Activated CD8-positive, alpha-beta T cell treated with anti-CD3 and anti-CD28 coated beads for 36 hours (primary cell): ENCODE measurements at regions of chr1 and their contacts with region 1.

Region 1: DNA sequence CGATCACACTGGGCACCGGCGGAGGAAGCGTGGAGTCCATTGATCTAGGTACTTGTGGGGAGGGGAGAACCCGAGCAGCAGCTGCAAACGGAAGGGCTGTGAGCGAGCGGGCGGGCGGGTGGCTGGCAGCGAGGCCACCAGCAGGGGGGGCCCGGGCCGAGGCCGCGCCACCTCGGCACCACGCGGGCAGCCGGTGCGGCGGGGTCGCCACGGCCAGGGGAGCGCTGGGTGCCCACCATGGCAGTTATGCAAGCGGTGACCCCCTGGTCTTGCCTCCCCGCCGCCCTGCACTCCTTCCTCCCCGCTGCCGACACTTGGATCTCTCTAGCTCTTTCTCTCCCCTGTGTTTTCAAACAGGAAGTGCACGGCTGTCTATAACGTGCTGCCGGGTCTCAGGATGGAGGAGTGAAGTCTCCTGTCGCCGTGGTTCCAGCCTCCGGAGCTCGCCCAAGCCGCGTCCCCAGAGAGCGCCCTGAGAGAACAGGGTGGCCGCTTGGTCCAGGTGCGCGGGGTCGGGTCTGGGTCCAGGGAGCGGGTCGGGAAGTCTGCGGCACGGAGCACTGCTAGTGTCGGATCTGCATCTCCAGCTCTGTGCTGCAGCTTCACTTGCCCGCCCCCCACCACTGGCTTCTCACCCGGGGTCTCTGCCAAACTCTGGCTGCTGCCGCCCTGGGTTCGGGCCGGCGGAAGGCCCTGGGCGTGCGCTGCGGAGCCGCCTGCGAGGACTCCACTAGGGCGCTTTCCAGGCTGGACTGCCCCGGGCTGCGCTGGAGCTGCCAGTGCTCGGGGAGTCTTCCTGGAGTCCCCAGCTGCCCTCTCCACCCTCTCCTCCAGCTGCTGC is 22.7 kb downstream of the LRRC8D start:
- DNase-seq: peak; percentile 87
- ATAC-seq: peak; percentile 84
- H3K4me3 Mint-ChIP-seq: peak overlapping the region; percentile 88
- H3K27ac Mint-ChIP-seq: peak overlapping the region; percentile 96
- H3K4me1 Mint-ChIP-seq: peaks cover 54% of the 10 kb centered on the region
- H3K27me3 Mint-ChIP-seq: no peaks in the 10 kb centered on the region
- CTCF ChIP-seq: peak; percentile 88

Region 2: GRCh38 chr1:89739013-89739843 is 104.3 kb before region 1 on chr1:
- CTCF ChIA-PET with region 1: no interaction called
- POLR2A ChIA-PET with region 1: no interaction called
- intact Hi-C with region 1: no loop called
- DNase-seq: peak; percentile 83
- ATAC-seq: peak; percentile 91
- H3K4me3 Mint-ChIP-seq: peak overlapping the region; percentile 70
- H3K27ac Mint-ChIP-seq: peak overlapping the region; percentile 93
- H3K4me1 Mint-ChIP-seq: peaks cover 50% of the 10 kb centered on the region
- H3K27me3 Mint-ChIP-seq: no peaks in the 10 kb centered on the region
- CTCF ChIP-seq: no peak

Region 3: DNA sequence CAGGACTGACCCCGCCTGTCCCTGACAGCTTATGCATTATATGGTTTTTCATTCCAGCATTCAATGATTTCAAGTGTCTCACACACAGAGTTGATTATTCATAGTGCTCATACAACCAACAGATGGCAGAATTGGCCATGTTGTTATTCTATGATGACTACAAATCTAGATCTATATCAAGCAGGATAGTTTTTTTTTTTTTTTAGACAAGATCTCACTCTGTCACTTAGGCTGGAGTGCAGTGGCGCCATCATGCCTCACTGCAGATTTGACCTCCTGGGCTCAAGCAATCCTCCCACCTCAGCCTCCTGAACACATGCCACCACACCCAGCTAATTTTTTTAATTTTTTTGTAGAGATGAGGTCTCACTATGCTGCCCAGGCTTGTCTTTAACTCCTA is 62.8 kb before region 1 on chr1:
- CTCF ChIA-PET with region 1: interaction called, 8 read pairs
- POLR2A ChIA-PET with region 1: interaction called, 11 read pairs
- intact Hi-C with region 1: loop called (anchors 10 kb)
- DNase-seq: peak; percentile 62
- ATAC-seq: peak; percentile 68
- H3K4me3 Mint-ChIP-seq: peak overlapping the region; percentile 36
- H3K27ac Mint-ChIP-seq: peak overlapping the region; percentile 93
- H3K4me1 Mint-ChIP-seq: peaks cover 48% of the 10 kb centered on the region
- H3K27me3 Mint-ChIP-seq: no peaks in the 10 kb centered on the region
- CTCF ChIP-seq: peak; percentile 56

Region 4: GRCh38 chr1:89820422-89821321 is 22.8 kb before region 1 on chr1 and contains the start of gene LRRC8D:
- CTCF ChIA-PET with region 1: interaction called, 31 read pairs
- POLR2A ChIA-PET with region 1: interaction called, 21 read pairs
- intact Hi-C with region 1: no loop called
- DNase-seq: peak; percentile 80
- ATAC-seq: peak; percentile 78
- H3K4me3 Mint-ChIP-seq: peak within 1 kb of the TSS; percentile 87
- H3K27ac Mint-ChIP-seq: peak within 1 kb of the TSS; percentile 88
- H3K4me1 Mint-ChIP-seq: peaks cover 43% of the 10 kb centered on the region
- H3K27me3 Mint-ChIP-seq: no peaks in the 10 kb centered on the region
- CTCF ChIP-seq: no peak
- total RNA-seq, gene LRRC8D: 26.3 to 27.5 TPM

Region 5: GRCh38 chr1:89855413-89856123 is 12.1 kb after region 1 on chr1:
- CTCF ChIA-PET with region 1: interaction called, 21 read pairs
- POLR2A ChIA-PET with region 1: interaction called, 10 read pairs
- intact Hi-C with region 1: no loop called
- DNase-seq: no peak
- ATAC-seq: peak; percentile 66
- H3K4me3 Mint-ChIP-seq: no peak overlapping the region
- H3K27ac Mint-ChIP-seq: no peak overlapping the region
- H3K4me1 Mint-ChIP-seq: peaks cover 23% of the 10 kb centered on the region
- H3K27me3 Mint-ChIP-seq: no peaks in the 10 kb centered on the region
- CTCF ChIP-seq: no peak